PC-9 (cell line): ENCODE measurements at regions of chr7 and their contacts with region 1.

Region 1: DNA sequence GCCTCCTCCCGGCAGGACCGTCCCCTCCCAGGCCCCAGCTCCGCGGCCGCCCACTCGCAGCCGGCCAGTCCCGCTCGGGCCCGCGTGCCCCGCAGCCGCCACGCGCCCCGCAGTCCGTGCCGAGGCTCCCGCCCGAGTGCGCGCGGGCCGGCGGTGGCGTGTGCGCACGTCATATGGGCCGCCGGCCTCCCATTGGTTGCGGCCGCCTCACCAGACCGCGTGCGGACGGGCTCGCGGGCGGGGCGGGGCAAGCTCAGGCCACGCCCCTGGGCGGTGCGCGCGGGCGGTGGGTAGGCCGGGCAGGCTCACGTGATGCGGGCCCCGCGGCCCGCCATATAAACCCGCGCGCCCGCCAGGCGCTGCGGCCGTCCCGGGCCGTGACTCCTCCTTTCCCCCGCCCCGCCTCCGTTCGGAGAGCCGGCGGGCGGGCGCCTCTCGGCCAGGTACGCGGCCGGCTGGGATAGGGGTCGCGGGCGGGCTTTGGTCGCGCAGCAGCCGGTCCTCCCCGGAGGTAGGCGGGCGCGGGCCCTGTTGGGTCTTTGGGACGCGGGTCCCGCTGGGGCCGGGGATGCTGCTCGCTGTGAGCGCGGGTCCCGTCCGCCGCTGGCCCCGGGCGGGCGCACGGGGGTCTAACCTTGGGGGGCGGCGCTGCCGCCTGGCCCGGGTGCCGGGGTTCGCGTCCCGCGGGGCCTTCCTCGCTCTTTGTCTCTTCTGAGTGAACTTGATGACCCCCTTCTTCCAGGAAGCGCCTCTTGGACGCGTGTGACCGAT is at the start of gene INSIG1:
- DNase-seq: peak; percentile 83 to 98
- H3K4me3 ChIP-seq: peak within 1 kb of the TSS; percentile 90
- H3K27ac ChIP-seq: peak within 1 kb of the TSS; percentile 81
- H3K4me1 ChIP-seq: peaks cover 42% of the 10 kb centered on the region
- H3K27me3 ChIP-seq: no peaks in the 10 kb centered on the region
- CTCF ChIP-seq: no peak
- total RNA-seq, gene INSIG1: 75.7 and 103 TPM in 2 replicates

Region 2: DNA sequence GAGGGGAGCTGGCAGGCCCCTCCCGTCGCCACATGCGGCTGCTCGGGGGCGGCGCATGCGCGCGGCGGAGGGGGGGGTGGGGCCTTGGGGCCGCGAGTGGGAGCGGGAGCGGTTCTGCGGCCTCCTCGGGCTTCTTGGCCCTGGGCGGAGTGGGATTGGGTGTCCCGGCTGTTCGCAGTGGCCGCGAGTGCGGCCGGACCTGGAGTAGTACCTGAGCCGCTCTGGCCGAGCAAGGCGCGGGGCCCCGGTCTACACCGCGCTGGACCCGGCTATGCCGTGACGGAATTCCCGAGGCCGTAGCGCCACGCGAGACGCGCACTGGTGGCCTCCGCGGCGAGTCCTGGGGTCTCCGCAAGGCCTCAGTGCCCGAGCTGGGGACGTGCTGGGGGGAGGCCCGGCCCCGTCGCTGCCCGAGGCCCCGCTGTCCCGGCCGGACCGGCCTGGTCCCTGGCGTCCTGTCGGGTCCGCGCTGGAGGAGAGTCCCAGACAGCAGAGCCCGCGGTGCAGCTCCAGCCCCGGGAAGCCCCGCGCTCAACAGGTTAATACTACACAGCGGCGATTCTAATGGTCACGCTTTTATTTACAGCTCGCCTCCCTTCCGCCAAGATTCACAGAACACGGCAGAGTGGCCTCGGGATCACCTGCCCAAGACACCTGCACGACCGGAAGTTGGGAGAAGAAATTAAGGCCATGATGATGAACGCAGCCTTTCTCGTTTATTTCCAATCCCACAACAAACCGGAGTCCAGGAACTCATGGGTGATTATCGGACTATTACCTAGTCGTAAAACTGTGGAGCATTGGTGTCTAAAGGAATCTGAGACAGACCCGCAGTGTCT is 294.1 kb before region 1 on chr7:
- CTCF ChIA-PET with region 1: interaction called, 5 read pairs
- POLR2A ChIA-PET with region 1: interaction called, 6 read pairs
- intact Hi-C with region 1: loop called (anchors 2 kb)
- DNase-seq: peak; percentile 81 to 86
- H3K4me3 ChIP-seq: peak overlapping the region; percentile 63
- H3K27ac ChIP-seq: peak overlapping the region; percentile 67
- H3K4me1 ChIP-seq: peaks cover 22% of the 10 kb centered on the region
- H3K27me3 ChIP-seq: no peaks in the 10 kb centered on the region
- CTCF ChIP-seq: no peak

Region 3: GRCh38 chr7:155190688-155191087 is 107.0 kb before region 1 on chr7:
- CTCF ChIA-PET with region 1: no interaction called
- POLR2A ChIA-PET with region 1: no interaction called
- intact Hi-C with region 1: loop called (anchors 2 kb)
- DNase-seq: peak in 1 of 2 experiments; percentile 72
- H3K4me3 ChIP-seq: no peak overlapping the region
- H3K27ac ChIP-seq: no peak overlapping the region
- H3K4me1 ChIP-seq: 0 out of 2 replicates have a peak, but pooled peaks cover 5% of the 10 kb centered on the region
- H3K27me3 ChIP-seq: peaks cover 49% of the 10 kb centered on the region
- CTCF ChIP-seq: peak; percentile 98

Region 4: GRCh38 chr7:155205368-155206317 is 92.1 kb before region 1 on chr7:
- CTCF ChIA-PET with region 1: no interaction called
- POLR2A ChIA-PET with region 1: interaction called, 14 read pairs
- intact Hi-C with region 1: loop called (anchors 1 kb)
- DNase-seq: peak; percentile 91 to 99
- H3K4me3 ChIP-seq: peak overlapping the region; percentile 53
- H3K27ac ChIP-seq: peak overlapping the region; percentile 90
- H3K4me1 ChIP-seq: peaks cover 44% of the 10 kb centered on the region
- H3K27me3 ChIP-seq: no peaks in the 10 kb centered on the region
- CTCF ChIP-seq: no peak

Region 5: GRCh38 chr7:155213955-155214740 is 83.6 kb before region 1 on chr7:
- CTCF ChIA-PET with region 1: interaction called, 3 read pairs
- POLR2A ChIA-PET with region 1: interaction called, 6 read pairs
- intact Hi-C with region 1: loop called (anchors 1 kb)
- DNase-seq: peak; percentile 69 to 78
- H3K4me3 ChIP-seq: peak overlapping the region; percentile 57
- H3K27ac ChIP-seq: peak overlapping the region; percentile 30
- H3K4me1 ChIP-seq: peaks cover 42% of the 10 kb centered on the region
- H3K27me3 ChIP-seq: no peaks in the 10 kb centered on the region
- CTCF ChIP-seq: no peak

Region 6: DNA sequence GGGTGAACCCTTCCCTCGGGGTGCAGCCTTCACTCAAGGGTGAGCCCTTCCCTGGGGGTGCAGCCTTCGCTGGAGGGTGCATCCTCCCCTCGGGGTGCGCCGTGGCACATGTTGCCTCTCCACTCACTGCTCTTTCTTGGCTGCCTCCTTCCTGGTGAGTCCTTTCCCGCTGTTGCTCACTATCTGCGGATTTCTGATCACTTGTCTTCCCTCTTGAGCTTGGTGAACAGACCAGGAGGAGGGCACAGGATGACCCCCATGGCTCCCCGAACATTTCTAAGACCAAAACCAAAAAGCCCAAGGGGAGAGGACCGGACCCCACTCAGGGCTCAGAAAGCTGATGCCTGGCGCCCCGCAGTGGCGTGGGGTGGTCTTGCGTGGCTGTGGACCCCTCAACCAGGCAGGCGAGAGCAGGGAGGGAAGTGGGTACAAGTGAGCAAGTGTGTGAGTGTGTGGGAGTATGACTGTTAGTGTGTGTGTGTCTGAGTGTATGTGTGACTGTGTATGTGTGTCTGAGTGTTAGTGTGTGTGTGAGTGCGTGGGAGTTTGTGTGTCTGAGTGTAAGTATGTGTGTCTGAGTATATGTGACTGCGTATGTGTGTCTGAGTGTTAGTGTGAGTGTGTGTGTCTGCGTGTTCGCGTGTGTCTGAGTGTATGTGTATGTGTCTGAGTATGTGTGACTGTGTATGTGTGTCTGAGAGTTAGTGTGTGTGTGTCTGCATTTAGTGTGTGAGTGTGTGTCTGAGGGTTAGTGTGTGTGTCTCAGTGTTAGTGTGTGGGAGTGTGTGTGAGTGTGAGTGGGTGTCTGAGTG is 34.2 kb before region 1 on chr7:
- CTCF ChIA-PET with region 1: no interaction called
- POLR2A ChIA-PET with region 1: interaction called, 5 read pairs
- intact Hi-C with region 1: loop called (anchors 2 kb)
- DNase-seq: no peak
- H3K4me3 ChIP-seq: no peak overlapping the region
- H3K27ac ChIP-seq: no peak overlapping the region
- H3K4me1 ChIP-seq: peaks cover 16% of the 10 kb centered on the region
- H3K27me3 ChIP-seq: peaks cover 6% of the 10 kb centered on the region; the same call in 1 of the 2 replicates
- CTCF ChIP-seq: no peak; the same call in 1 of the 2 replicates